GM12878 (cell line): ENCODE measurements at regions of chr2 and their contacts with region 1.

Region 1: GRCh38 chr2:76197842-76198448 is 487.2 kb upstream of the GCFC2 start:
- DNase-seq: peak; percentile 20
- ATAC-seq: peak; percentile 82
- H3K4me3 ChIP-seq: no peak overlapping the region
- H3K27ac ChIP-seq: no peak overlapping the region
- H3K4me1 ChIP-seq: no peaks in the 10 kb centered on the region
- H3K27me3 ChIP-seq: no peaks in the 10 kb centered on the region
- CTCF ChIP-seq: peak; percentile 63 to 72 (median 64)
- EP300 ChIP-seq: no peak
- POLR2A ChIP-seq: no peak
- RAD21 ChIP-seq: peak; percentile 64

Region 2: DNA sequence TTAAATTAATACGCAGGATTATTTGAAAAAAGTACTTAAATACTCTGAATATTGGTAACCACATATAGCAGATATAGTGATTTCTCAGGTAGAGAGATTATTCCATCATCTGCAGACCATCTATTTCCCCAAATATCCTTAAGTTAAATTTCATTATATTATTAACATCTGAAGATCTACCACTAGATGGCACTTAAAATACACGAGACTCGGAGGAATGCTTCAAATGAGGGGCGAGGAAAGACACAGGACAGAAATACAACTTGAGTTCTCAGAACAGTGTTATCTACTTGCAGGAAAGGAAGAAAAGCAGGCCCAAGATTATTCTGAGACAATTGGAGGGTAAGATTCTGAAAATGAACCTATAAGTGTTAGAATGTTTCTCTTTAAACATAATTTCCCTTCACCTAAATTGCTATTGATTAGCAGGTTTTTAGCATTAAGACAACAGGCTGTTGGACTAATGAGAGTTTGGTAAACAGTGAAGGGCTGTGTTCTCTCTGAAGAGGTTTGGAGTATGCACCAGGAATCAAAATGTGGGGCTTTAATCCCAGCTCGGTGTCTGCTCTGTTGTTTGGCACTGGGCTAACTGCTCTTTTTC is 410.3 kb before region 1 on chr2:
- CTCF ChIA-PET with region 1: interaction called, 9 read pairs
- POLR2A ChIA-PET with region 1: no interaction called
- RAD21 ChIA-PET with region 1: no interaction called
- SMC1A ChIA-PET with region 1: interaction called, 4 read pairs
- in situ Hi-C with region 1: no loop called
- intact Hi-C with region 1: loop called (anchors 2 kb)
- DNase-seq: no peak
- ATAC-seq: peak; percentile 76
- H3K4me3 ChIP-seq: no peak overlapping the region
- H3K27ac ChIP-seq: no peak overlapping the region
- H3K4me1 ChIP-seq: peaks cover 14% of the 10 kb centered on the region
- H3K27me3 ChIP-seq: no peaks in the 10 kb centered on the region
- CTCF ChIP-seq: peak; percentile 38 to 65 (median 40)
- EP300 ChIP-seq: no peak
- POLR2A ChIP-seq: no peak
- RAD21 ChIP-seq: peak; percentile 91

Region 3: DNA sequence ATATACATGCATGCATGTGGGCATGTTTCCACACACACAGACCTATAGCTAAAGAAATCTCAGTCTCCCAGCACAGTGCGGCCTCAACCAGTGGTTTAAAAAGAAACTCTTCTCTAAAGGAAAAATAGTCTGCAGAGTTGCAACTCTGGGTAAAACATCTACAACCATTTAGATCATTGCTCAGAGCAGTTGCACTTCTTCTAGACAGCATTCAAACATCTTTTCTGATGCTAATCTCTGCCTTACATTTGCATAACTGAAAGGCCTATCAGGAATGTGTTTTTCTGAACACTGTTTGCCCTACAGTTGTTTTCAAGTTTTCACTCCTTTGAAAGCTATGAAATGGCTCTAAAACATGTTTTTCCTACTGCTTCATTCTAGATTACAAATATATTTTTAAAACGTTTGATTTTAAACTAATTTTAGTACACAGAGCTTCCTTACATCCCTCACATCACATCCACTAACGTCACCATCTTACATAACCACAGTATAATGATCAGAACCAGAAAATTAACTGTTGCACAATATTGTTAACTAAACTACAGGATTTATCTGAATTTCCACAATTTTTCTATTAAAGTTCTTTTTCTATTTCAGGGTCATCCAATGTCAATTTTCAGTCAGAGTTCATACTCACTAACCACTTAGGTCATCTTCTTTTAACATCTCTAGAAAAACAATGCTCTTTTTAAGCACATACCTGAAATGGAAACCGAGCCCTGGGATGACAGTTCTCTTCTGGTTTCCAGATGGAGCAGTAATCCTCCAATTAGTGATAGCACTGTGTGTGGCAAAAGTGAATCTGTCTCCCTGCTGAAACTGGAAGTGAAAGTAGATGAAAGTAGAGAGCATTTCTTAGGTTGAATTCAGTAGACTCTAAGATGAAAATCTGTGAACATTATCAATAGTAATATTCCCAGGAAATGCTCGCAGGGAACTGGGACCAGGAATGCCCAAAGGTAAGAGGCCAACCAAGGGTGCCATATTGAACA is 14.3 kb after region 1 on chr2:
- CTCF ChIA-PET with region 1: interaction called, 19 read pairs
- POLR2A ChIA-PET with region 1: no interaction called
- RAD21 ChIA-PET with region 1: interaction called, 3 read pairs
- SMC1A ChIA-PET with region 1: interaction called, 7 read pairs
- in situ Hi-C with region 1: no loop called
- intact Hi-C with region 1: no loop called
- DNase-seq: no peak
- ATAC-seq: peak; percentile 83
- H3K4me3 ChIP-seq: no peak overlapping the region
- H3K27ac ChIP-seq: no peak overlapping the region
- H3K4me1 ChIP-seq: no peaks in the 10 kb centered on the region
- H3K27me3 ChIP-seq: no peaks in the 10 kb centered on the region; a peak in 1 of 4 replicates
- CTCF ChIP-seq: no peak
- EP300 ChIP-seq: no peak
- POLR2A ChIP-seq: no peak
- RAD21 ChIP-seq: no peak

Region 4: DNA sequence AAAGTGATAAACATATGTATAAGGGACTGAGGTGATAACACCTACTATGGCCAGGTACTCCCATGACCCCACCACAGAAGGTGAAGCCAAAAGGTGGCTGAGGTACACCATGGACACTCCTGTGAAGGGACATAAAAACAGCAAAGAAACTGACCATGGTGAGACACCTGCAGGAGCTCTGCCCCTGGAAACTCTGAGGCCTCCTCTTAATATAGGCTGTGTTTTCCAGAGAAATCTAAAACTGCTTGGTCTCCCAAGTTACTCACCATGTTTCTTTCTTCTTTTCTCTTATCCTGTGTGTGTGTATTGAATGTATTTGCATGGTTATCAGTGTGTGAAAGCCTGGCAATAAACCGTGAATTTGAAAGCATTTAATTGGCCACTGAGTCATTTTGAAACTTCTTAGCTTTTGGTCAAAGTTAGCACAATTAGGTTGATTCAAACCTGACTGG is 252.1 kb after region 1 on chr2:
- CTCF ChIA-PET with region 1: interaction called, 19 read pairs
- POLR2A ChIA-PET with region 1: no interaction called
- RAD21 ChIA-PET with region 1: no interaction called
- SMC1A ChIA-PET with region 1: interaction called, 4 read pairs
- in situ Hi-C with region 1: no loop called
- intact Hi-C with region 1: no loop called
- DNase-seq: peak; percentile 90
- ATAC-seq: peak; percentile 93
- H3K4me3 ChIP-seq: no peak overlapping the region
- H3K27ac ChIP-seq: no peak overlapping the region
- H3K4me1 ChIP-seq: 0 out of 2 replicates have a peak, but pooled peaks cover 3% of the 10 kb centered on the region
- H3K27me3 ChIP-seq: no peaks in the 10 kb centered on the region
- CTCF ChIP-seq: no peak
- EP300 ChIP-seq: peak; percentile 87 to 97
- POLR2A ChIP-seq: no peak
- RAD21 ChIP-seq: no peak

Region 5: DNA sequence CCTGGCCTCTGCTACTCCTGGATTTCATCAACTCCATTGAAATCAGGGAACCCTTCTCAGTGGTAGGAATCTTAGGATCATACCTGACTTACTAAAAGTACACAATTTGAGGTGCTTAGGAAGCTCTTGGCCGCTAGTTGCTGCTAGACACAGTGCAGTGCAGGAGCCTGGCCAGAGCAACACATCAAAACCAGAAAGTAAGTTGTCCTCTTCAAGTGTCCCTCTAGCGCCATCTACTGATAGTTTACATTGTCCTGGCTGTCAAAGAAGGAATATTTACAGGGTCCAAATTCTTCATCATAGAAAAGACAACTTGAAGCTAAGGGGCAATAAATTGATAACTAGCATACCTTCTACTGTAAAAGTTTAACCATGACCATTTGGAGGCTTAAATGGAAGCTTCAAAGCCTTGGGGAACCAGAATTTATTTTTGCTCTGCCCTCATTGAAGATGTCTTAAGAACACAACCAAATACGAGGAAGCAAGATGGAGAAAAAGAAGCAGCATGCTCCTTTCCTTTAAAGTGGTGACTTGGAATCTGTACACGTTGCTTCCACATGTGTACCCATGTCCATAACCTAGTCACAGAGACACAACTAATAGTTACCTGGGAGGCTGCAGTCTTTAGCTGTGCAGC is 401.9 kb after region 1 on chr2:
- CTCF ChIA-PET with region 1: interaction called, 123 read pairs
- POLR2A ChIA-PET with region 1: no interaction called
- RAD21 ChIA-PET with region 1: interaction called, 32 read pairs
- SMC1A ChIA-PET with region 1: interaction called, 51 read pairs
- in situ Hi-C with region 1: loop called (anchors 5 kb)
- intact Hi-C with region 1: loop called (anchors 1 kb)
- DNase-seq: peak; percentile 43
- ATAC-seq: peak; percentile 100
- H3K4me3 ChIP-seq: no peak overlapping the region
- H3K27ac ChIP-seq: no peak overlapping the region
- H3K4me1 ChIP-seq: no peaks in the 10 kb centered on the region
- H3K27me3 ChIP-seq: no peaks in the 10 kb centered on the region
- CTCF ChIP-seq: peak; percentile 77 to 93 (median 84)
- EP300 ChIP-seq: no peak
- POLR2A ChIP-seq: no peak
- RAD21 ChIP-seq: peak; percentile 89